Vagina (tissue), 2 donors: ENCODE measurements at regions of chr7 and their contacts with region 1.

Region 1: GRCh38 chr7:96985992-96986391 is 19.4 kb upstream of the DLX6 start:
- DNase-seq: no peak
- H3K4me3 ChIP-seq: no peak overlapping the region
- H3K27ac ChIP-seq: no peak overlapping the region
- H3K4me1 ChIP-seq: no peaks in the 10 kb centered on the region
- H3K27me3 ChIP-seq: peaks cover 6% of the 10 kb centered on the region
- CTCF ChIP-seq: no peak
- POLR2A ChIP-seq: no peak

Region 2: GRCh38 chr7:96959135-96959534 is 26.9 kb before region 1 on chr7:
- intact Hi-C with region 1: loop called (anchors 2 kb)
- DNase-seq: no peak
- H3K4me3 ChIP-seq: no peak overlapping the region
- H3K27ac ChIP-seq: no peak overlapping the region
- H3K4me1 ChIP-seq: no peaks in the 10 kb centered on the region
- H3K27me3 ChIP-seq: no peaks in the 10 kb centered on the region
- CTCF ChIP-seq: no peak
- POLR2A ChIP-seq: no peak